ENCODE measurements at regions of chr17 and their contacts with region 1.

Region 1: GRCh38 chr17:55783684-55784245 is 32.9 kb downstream of the PCTP start:
- DNase-seq: peak; percentile 88 to 95
- ATAC-seq: peak; percentile 93 to 95
- H3K4me3 ChIP-seq: peak overlapping the region in 2 of 4 donors; percentile 9 to 10
- H3K27ac ChIP-seq: peak overlapping the region; percentile 83 to 93 (median 89)
- H3K4me1 ChIP-seq: peaks cover 23 to 32% of the 10 kb centered on the region in 2 donors
- H3K27me3 ChIP-seq: no peaks in the 10 kb centered on the region
- CTCF ChIP-seq: no peak
- POLR2A ChIP-seq: peak in 1 of 2 donors; percentile 70

Region 2: DNA sequence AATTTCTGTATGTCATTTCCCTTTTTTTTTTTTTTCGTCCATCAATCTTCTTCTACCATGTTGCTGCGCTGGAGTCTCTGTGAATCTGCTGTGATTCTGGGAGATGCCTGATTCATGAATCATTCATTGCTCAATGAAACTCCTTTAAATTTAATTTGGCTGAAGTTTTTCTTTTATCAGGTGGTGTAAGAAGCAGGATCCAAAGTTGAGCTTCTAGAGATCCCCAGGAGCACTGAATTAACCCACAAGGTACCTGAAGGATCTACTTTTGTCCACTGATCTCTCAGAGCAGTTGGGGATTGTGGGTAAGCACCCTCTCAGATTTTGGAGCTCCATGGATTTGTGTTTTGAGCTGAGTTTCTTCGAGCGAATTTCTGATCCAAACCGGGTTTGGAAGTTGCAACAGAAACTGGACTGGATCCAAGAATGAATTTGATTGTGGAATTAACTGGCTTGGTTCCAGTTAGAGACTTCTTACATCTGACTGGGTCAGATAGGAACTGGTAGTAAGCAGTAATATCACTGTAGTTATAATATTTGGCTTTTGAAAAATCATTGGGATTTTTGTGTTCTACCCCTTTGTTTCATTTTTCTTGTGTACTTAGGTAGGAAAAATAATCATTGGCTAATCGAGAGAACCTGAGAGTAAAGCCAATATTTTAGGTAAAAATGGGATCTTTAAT is 1331.0 kb before region 1 on chr17:
- in situ Hi-C with region 1: no loop called
- intact Hi-C with region 1: no loop called
- DNase-seq: no peak
- ATAC-seq: no peak
- H3K4me3 ChIP-seq: no peak overlapping the region
- H3K27ac ChIP-seq: no peak overlapping the region
- H3K4me1 ChIP-seq: no peaks in the 10 kb centered on the region
- H3K27me3 ChIP-seq: no peaks in the 10 kb centered on the region
- CTCF ChIP-seq: no peak
- POLR2A ChIP-seq: no peak

Region 3: DNA sequence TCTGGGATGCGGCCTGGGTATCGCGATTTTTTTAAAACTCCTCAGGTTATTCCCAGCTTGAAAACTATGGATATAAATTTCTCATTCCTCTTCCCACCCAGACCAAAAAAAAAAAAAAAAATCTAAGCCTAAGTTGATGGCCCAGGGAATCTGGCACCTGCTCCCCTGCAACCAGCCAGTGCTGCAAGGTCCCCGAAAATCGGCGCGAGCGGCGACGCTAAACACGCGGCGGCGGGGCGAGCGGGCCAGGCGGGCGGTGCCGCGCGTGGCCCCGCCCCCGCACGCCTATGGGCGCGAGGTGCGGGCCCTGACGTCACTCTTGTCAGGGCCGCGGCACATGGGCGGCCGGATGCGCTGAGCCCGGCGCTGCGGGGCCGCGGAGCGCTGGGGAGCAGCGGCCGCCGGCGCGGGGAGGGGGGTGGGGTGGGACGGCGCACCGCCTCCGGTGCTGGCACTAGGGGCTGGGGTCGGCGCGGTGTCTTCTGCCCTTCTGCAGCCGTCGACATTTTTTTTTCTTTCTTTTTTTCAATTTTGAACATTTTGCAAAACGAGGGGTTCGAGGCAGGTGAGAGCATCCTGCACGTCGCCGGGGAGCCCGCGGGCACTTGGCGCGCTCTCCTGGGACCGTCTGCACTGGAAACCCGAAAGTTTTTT is 519.0 kb before region 1 on chr17 and contains the start of gene HLF:
- in situ Hi-C with region 1: no loop called
- intact Hi-C with region 1: loop called (anchors 5 kb)
- DNase-seq: peak; percentile 59 to 72
- ATAC-seq: peak; percentile 85
- H3K4me3 ChIP-seq: peak within 1 kb of the TSS; percentile 66 to 88 (median 72)
- H3K27ac ChIP-seq: peak within 1 kb of the TSS; percentile 78 to 92 (median 78)
- H3K4me1 ChIP-seq: peaks cover 19 to 29% of the 10 kb centered on the region in 2 donors
- H3K27me3 ChIP-seq: no peaks in the 10 kb centered on the region
- CTCF ChIP-seq: peak in 2 of 5 experiments; percentile 8 to 19
- POLR2A ChIP-seq: peak; percentile 79 to 82
- total RNA-seq, gene HLF: 7.7 to 14.8 (median 10.4) TPM

Region 4: GRCh38 chr17:55452139-55452790 is 331.5 kb before region 1 on chr17:
- in situ Hi-C with region 1: no loop called
- intact Hi-C with region 1: loop called (anchors 1 kb)
- DNase-seq: peak; percentile 25 to 38
- ATAC-seq: peak; percentile 64 to 75
- H3K4me3 ChIP-seq: no peak overlapping the region
- H3K27ac ChIP-seq: peak overlapping the region in 3 of 4 donors; percentile 53 to 72 (median 66)
- H3K4me1 ChIP-seq: peaks cover 12 to 19% of the 10 kb centered on the region in 2 donors
- H3K27me3 ChIP-seq: no peaks in the 10 kb centered on the region
- CTCF ChIP-seq: no peak
- POLR2A ChIP-seq: no peak

Region 5: DNA sequence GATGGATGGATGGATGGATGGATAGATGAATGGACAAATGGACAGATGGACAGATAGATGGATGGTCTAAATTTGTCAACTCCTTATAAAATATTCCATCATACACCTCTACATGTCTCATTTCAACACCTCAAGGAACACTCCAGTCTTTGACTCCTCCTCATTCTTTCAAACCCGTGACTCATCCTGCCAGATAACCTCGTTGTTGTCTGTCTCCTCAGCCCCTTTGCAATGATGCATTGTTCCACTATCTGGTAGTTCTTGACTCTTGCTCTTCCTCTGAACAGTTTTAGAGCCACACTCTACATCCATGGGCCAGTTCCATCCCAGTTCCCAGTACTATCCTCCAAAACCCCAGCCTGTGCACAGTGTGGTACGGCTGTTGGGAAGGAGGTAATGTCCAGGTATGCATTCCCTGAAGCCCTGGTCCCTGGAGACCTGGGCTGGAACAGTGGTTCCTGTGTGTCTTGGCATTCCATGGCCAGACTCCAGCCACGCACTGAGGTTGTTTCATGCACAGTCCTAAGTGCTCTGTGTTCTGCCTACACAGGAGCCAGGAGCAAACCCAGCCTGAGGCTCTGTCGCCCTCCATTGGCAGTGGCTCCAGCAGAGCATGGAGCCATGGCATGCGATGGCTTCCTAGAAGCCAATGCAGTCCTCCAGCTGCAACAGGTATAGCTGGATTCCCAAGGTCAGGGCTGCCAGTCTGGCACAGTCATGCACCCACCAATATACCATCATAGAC is 944.3 kb after region 1 on chr17:
- in situ Hi-C with region 1: no loop called
- intact Hi-C with region 1: no loop called
- DNase-seq: no peak
- ATAC-seq: no peak
- H3K4me3 ChIP-seq: no peak overlapping the region
- H3K27ac ChIP-seq: no peak overlapping the region
- H3K4me1 ChIP-seq: no peaks in the 10 kb centered on the region
- H3K27me3 ChIP-seq: no peaks in the 10 kb centered on the region
- CTCF ChIP-seq: no peak
- POLR2A ChIP-seq: no peak

Measured in gastrocnemius medialis (tissue), 4 donors.